Right cardiac atrium (tissue), 5 donors: ENCODE measurements at regions of chr17 and their contacts with region 1.

Region 1: GRCh38 chr17:64262417-64263260 is at the start of gene TEX2:
- DNase-seq: peak; percentile 60 to 78 (median 77)
- ATAC-seq: peak; percentile 60 to 66
- H3K4me3 ChIP-seq: peak within 1 kb of the TSS; percentile 88
- H3K27ac ChIP-seq: peak within 1 kb of the TSS; percentile 94
- H3K4me1 ChIP-seq: peaks cover 7% of the 10 kb centered on the region
- H3K27me3 ChIP-seq: no peaks in the 10 kb centered on the region
- total RNA-seq, gene TEX2: 42.6 to 56.8 (median 46.6) TPM

Region 2: GRCh38 chr17:63974594-63975192 is 287.9 kb before region 1 on chr17:
- intact Hi-C with region 1: no loop called
- DNase-seq: peak in 2 of 3 donors; percentile 29 to 43
- ATAC-seq: peak in 1 of 2 donors; percentile 4
- H3K4me3 ChIP-seq: no peak overlapping the region
- H3K27ac ChIP-seq: no peak overlapping the region
- H3K4me1 ChIP-seq: peaks cover 9% of the 10 kb centered on the region
- H3K27me3 ChIP-seq: no peaks in the 10 kb centered on the region

Region 3: DNA sequence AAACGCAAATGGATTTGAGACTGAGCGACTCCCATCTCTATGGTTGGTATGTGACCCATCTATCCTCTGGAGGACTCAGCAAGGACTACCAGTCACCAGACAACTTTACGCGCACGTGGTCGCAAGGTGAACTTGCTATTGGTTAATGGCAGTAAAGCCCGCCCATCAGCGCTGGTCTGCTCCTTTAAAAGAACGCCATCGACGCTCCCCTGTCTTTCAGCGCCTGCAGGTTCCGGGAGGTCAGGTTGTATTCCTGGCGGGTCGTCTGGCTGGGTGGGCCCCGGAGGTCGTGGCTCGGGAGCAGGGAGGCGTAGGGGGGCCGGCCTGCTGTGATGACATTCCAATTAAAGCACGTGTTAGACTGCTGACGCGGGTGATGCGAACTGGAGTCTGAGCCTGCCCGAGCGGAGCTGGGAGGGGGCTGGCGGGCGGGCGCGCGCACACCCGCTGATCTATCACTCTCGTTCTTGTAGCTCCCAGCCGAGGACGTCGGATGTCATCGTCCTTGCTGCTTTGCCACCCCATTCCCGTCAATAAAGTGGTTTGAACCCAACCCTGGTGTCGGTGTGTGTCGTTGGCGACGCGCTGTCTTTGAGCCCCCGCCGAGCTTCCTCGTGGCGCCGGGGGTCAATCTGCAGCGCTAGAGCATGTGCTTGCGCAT is 116.8 kb before region 1 on chr17:
- intact Hi-C with region 1: loop called in 3 of 4 experiments (anchors 5 to 10 kb)
- DNase-seq: peak; percentile 97 to 98 (median 98)
- ATAC-seq: peak; percentile 97
- H3K4me3 ChIP-seq: peak overlapping the region; percentile 62
- H3K27ac ChIP-seq: peak overlapping the region; percentile 93
- H3K4me1 ChIP-seq: peaks cover 11% of the 10 kb centered on the region
- H3K27me3 ChIP-seq: no peaks in the 10 kb centered on the region

Region 4: DNA sequence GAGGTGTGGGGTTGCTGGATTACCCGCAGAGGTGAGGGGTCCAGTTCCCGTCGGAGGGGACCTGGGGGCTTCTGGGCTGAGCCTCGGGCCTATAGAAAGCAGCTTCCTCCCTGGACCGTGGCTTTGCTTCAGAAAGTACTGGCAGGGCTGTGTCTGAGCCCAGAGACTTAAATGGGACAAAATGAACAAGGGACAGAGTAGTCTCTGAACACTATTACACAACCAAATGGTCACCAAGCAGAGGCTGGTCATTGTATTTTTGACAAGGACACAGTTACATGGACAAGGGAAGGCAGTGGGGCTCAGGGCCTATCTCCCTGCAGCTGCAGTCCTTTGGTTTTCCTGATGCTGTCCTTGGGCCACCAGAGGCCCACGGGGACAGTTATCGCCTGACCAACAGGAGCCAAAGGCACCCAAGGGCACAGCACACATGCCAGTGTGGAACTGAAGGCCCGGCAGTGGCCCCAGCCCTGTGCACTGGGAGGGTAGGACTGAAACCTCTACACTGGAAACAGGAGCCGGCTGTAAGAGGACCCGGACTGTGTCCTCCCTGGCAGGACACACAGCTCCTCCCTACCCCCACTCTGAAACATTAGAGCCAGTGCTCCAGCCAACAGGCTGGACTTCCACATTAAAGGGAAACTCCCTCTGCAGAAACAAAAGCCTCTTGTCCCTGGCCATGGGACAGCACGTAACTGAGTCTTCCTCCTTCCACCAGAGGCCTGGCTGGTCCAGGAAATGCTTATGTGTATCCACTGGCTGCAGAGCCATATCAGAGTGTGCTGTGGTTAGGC is 106.7 kb before region 1 on chr17:
- intact Hi-C with region 1: loop called in 2 of 4 experiments (anchors 5 to 10 kb)
- DNase-seq: peak; percentile 76 to 89 (median 85)
- ATAC-seq: peak; percentile 94 to 95
- H3K4me3 ChIP-seq: no peak overlapping the region
- H3K27ac ChIP-seq: peak overlapping the region; percentile 93
- H3K4me1 ChIP-seq: peaks cover 23% of the 10 kb centered on the region
- H3K27me3 ChIP-seq: no peaks in the 10 kb centered on the region